ENCODE measurements at regions of chrX and their contacts with region 1.

Region 1: DNA sequence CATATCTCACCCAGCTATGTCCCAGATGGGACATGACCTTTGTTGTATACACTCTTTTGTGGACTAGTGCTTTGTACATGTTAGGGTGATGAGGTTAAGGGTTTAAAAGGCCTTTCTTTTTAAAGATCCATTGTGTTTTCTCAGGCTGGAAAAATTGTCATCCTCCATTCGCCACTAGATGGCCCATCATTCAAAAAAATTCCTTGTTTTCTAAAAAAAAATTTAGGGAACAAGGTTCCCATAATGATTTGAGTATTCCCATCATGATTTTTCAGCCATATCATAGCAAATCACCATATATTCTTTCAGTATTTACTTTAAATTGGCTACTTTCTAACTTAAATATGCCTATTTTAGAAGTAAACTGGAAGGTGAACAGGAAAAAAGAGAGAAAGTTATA is 91.9 kb upstream of the TMEM164 start:
- H3K4me3 ChIP-seq: no peak overlapping the region
- H3K27ac ChIP-seq: no peak overlapping the region
- H3K4me1 ChIP-seq: no peaks in the 10 kb centered on the region
- CTCF ChIP-seq: no peak; the same call in 1 of the 2 replicates

Region 2: GRCh38 chrX:109856974-109857373 is 54.1 kb before region 1 on chrX:
- CTCF ChIA-PET with region 1: no interaction called
- POLR2A ChIA-PET with region 1: no interaction called
- H3K4me3 ChIP-seq: no peak overlapping the region
- H3K27ac ChIP-seq: no peak overlapping the region
- H3K4me1 ChIP-seq: no peaks in the 10 kb centered on the region
- CTCF ChIP-seq: no peak

Region 3: GRCh38 chrX:110066488-110067225 is 155.6 kb after region 1 on chrX:
- CTCF ChIA-PET with region 1: no interaction called
- POLR2A ChIA-PET with region 1: no interaction called
- H3K4me3 ChIP-seq: no peak overlapping the region
- H3K27ac ChIP-seq: no peak overlapping the region
- H3K4me1 ChIP-seq: no peaks in the 10 kb centered on the region
- CTCF ChIP-seq: no peak

Region 4: GRCh38 chrX:110125446-110126162 is 214.6 kb after region 1 on chrX:
- CTCF ChIA-PET with region 1: interaction called, 13 read pairs
- POLR2A ChIA-PET with region 1: no interaction called
- H3K4me3 ChIP-seq: no peak overlapping the region
- H3K27ac ChIP-seq: no peak overlapping the region
- H3K4me1 ChIP-seq: no peaks in the 10 kb centered on the region
- CTCF ChIP-seq: 0 out of 2 replicates have a peak, but pooled peaks have one; percentile 32